GM12878 (cell line): ENCODE measurements at regions of chr12 and their contacts with region 1.

Region 1: GRCh38 chr12:38872561-38872960 is 32.8 kb downstream of the CPNE8 start:
- DNase-seq: no peak
- ATAC-seq: no peak
- H3K4me3 ChIP-seq: no peak overlapping the region
- H3K27ac ChIP-seq: no peak overlapping the region
- H3K4me1 ChIP-seq: no peaks in the 10 kb centered on the region
- H3K27me3 ChIP-seq: no peaks in the 10 kb centered on the region
- CTCF ChIP-seq: no peak
- EP300 ChIP-seq: no peak
- POLR2A ChIP-seq: no peak
- RAD21 ChIP-seq: no peak

Region 2: GRCh38 chr12:38809832-38810231 is 62.7 kb before region 1 on chr12:
- CTCF ChIA-PET with region 1: no interaction called
- POLR2A ChIA-PET with region 1: no interaction called
- RAD21 ChIA-PET with region 1: no interaction called
- SMC1A ChIA-PET with region 1: no interaction called
- in situ Hi-C with region 1: no loop called
- intact Hi-C with region 1: no loop called
- DNase-seq: no peak
- ATAC-seq: no peak
- H3K4me3 ChIP-seq: no peak overlapping the region
- H3K27ac ChIP-seq: no peak overlapping the region
- H3K4me1 ChIP-seq: no peaks in the 10 kb centered on the region
- H3K27me3 ChIP-seq: no peaks in the 10 kb centered on the region
- CTCF ChIP-seq: no peak
- EP300 ChIP-seq: no peak
- POLR2A ChIP-seq: no peak
- RAD21 ChIP-seq: no peak

Region 3: DNA sequence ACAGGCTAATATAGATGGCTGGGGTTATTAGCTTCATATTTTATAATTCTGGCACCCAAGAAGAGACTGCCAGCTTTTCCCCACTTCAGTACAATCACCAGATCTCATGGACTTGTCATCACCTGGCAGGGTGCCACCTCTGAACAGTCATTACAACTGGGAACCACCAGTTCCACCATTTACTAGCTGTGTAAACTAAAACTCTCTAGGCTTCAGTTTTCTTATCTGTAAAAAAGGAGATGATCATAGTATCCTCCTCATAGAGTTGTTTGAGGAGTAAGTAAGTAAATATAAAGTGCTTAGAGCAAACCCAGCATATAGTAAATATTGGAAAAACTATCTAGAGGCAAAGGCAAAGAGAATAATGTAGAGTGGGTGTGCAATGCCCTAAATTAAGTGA is 13.5 kb after region 1 on chr12:
- CTCF ChIA-PET with region 1: interaction called, 5 read pairs
- POLR2A ChIA-PET with region 1: interaction called, 5 read pairs
- RAD21 ChIA-PET with region 1: interaction called, 5 read pairs
- SMC1A ChIA-PET with region 1: interaction called, 16 read pairs
- in situ Hi-C with region 1: no loop called
- intact Hi-C with region 1: no loop called
- DNase-seq: no peak
- ATAC-seq: peak; percentile 47
- H3K4me3 ChIP-seq: no peak overlapping the region
- H3K27ac ChIP-seq: no peak overlapping the region
- H3K4me1 ChIP-seq: no peaks in the 10 kb centered on the region
- H3K27me3 ChIP-seq: no peaks in the 10 kb centered on the region
- CTCF ChIP-seq: no peak
- EP300 ChIP-seq: no peak
- POLR2A ChIP-seq: no peak
- RAD21 ChIP-seq: no peak